ENCODE measurements at regions of chr6 and their contacts with region 1.

Region 1: DNA sequence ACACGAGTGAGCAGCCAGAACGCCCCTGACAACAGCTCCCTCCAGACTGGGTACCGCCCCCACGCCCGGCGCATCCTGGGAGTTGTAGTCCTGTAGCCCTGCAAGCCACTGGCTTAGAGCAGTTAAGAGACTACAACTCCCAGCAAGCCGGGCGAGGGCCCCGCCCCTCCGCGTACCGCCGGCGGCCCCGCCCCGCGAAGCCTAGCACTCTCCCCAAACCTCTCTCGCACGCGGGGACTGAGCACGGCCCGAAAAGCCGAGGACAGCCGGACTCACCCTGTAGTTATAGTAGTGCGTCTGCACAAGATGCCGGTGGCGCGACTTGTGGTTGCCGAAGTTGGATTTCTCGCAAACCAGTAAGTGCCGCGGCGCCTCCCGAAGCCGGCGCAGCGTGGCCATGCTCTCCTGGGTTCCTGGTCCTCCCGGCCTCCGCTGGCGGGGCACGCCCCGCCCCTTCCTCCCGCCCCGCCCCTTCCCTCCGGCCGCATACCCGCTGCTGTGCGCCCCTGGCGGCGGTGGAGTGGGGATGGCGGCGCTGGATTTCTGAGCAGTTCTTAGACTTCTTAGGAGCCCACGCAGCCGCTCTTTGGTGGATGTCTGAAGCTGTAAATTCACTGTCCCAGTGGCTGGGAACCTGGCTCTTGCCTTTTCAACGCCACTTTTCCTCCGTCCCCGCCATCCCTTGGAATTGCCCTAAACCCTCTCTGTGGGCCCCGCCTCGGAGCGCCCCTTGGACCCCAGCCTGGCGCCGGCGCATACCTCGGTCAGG is at the start of gene RPP40:
- DNase-seq: peak; percentile 97 to 98
- H3K4me3 ChIP-seq: peak within 1 kb of the TSS; percentile 71 to 83
- H3K27ac ChIP-seq: peak within 1 kb of the TSS; percentile 88 to 99
- H3K4me1 ChIP-seq: peaks cover 0 to 5% (median 4%) of the 10 kb centered on the region in 4 donors
- H3K27me3 ChIP-seq: no peaks in the 10 kb centered on the region
- CTCF ChIP-seq: peak; percentile 75 to 93

Region 2: DNA sequence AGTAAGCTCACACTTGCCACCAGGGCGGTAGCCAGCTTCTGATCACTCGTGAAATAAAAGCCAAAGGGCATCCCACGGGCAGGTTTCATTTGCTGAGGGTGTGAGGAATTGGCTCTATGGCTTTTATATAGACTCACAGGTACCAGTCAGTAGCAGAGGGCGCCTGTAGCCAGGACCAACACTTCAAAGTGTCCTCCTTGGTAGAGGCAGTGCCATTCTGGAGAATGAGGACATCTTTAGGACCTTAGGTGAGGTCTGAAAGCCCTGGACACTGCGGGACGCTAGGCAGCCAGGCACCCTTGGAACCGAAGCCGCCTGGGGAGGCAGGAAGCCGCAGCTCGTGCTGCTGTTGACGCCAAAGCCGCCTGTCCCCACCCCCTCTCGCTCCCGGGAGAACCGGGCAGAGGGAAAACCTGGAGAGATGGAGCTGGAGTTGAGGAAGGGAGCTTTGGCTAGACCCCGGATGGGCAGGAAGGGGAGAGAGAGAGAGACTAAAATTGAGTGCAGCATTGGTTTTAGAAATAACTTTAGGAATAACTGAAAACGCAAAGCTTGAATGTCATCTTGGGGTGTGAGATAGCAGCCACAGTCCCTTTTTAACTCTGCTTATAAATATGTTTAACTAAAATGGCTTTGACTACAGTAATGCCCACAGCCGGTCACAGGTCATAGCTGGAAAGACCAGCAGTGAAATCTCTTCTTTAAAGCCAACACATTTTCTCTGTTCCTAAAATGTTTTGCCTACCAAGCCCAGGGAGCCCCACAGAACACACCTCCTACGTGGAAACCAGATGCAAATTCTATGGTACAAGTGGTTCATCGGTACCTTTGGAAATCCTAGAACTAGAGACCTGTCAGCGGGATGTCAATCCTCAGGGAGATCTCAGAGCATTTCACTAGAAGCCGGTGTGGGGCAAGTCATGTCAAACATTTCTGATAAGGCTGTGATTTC is 356.1 kb before region 1 on chr6:
- intact Hi-C with region 1: loop called (anchors 5 kb)
- DNase-seq: peak; percentile 74 to 92
- H3K4me3 ChIP-seq: peak overlapping the region; percentile 36 to 43
- H3K27ac ChIP-seq: peak overlapping the region; percentile 49 to 69
- H3K4me1 ChIP-seq: peaks cover 0 to 6% (median 0%) of the 10 kb centered on the region in 4 donors
- H3K27me3 ChIP-seq: no peaks in the 10 kb centered on the region
- CTCF ChIP-seq: no peak